AG04450 (cell line): ENCODE measurements at regions of chr1 and their contacts with region 1.

Region 1: GRCh38 chr1:154335025-154335714 is 9.8 kb downstream of the ATP8B2 start:
- DNase-seq: no peak
- H3K4me3 ChIP-seq: no peak overlapping the region
- H3K27ac ChIP-seq: peak overlapping the region; percentile 90
- H3K27me3 ChIP-seq: no peaks in the 10 kb centered on the region
- CTCF ChIP-seq: peak; percentile 88

Region 2: GRCh38 chr1:154183045-154183915 is 151.9 kb before region 1 on chr1:
- CTCF ChIA-PET with region 1: no interaction called
- POLR2A ChIA-PET with region 1: no interaction called
- DNase-seq: peak; percentile 79
- H3K4me3 ChIP-seq: peak overlapping the region; percentile 99
- H3K27ac ChIP-seq: peak overlapping the region; percentile 84
- H3K27me3 ChIP-seq: no peaks in the 10 kb centered on the region
- CTCF ChIP-seq: no peak

Region 3: GRCh38 chr1:154212083-154212482 is 123.1 kb before region 1 on chr1:
- CTCF ChIA-PET with region 1: interaction called, 12 read pairs
- POLR2A ChIA-PET with region 1: no interaction called
- DNase-seq: no peak
- H3K4me3 ChIP-seq: no peak overlapping the region
- H3K27ac ChIP-seq: no peak overlapping the region
- H3K27me3 ChIP-seq: no peaks in the 10 kb centered on the region
- CTCF ChIP-seq: no peak

Region 4: GRCh38 chr1:154263465-154264332 is 71.5 kb before region 1 on chr1:
- CTCF ChIA-PET with region 1: interaction called, 10 read pairs
- POLR2A ChIA-PET with region 1: no interaction called
- DNase-seq: no peak
- H3K4me3 ChIP-seq: no peak overlapping the region
- H3K27ac ChIP-seq: peak overlapping the region; percentile 39
- H3K27me3 ChIP-seq: no peaks in the 10 kb centered on the region
- CTCF ChIP-seq: no peak

Region 5: GRCh38 chr1:154352581-154353459 is 17.6 kb after region 1 on chr1:
- CTCF ChIA-PET with region 1: interaction called, 145 read pairs
- POLR2A ChIA-PET with region 1: no interaction called
- DNase-seq: no peak
- H3K4me3 ChIP-seq: peak overlapping the region; percentile 44
- H3K27ac ChIP-seq: no peak overlapping the region
- H3K27me3 ChIP-seq: peaks cover 5% of the 10 kb centered on the region
- CTCF ChIP-seq: no peak; the same call in 1 of the 2 replicates

Region 6: GRCh38 chr1:154371436-154371835 is 36.3 kb after region 1 on chr1:
- CTCF ChIA-PET with region 1: interaction called, 10 read pairs
- POLR2A ChIA-PET with region 1: no interaction called
- DNase-seq: no peak
- H3K4me3 ChIP-seq: no peak overlapping the region
- H3K27ac ChIP-seq: no peak overlapping the region
- H3K27me3 ChIP-seq: no peaks in the 10 kb centered on the region
- CTCF ChIP-seq: no peak